Testis (tissue), 5 donors: ENCODE measurements at regions of chr10 and their contacts with region 1.

Region 1: DNA sequence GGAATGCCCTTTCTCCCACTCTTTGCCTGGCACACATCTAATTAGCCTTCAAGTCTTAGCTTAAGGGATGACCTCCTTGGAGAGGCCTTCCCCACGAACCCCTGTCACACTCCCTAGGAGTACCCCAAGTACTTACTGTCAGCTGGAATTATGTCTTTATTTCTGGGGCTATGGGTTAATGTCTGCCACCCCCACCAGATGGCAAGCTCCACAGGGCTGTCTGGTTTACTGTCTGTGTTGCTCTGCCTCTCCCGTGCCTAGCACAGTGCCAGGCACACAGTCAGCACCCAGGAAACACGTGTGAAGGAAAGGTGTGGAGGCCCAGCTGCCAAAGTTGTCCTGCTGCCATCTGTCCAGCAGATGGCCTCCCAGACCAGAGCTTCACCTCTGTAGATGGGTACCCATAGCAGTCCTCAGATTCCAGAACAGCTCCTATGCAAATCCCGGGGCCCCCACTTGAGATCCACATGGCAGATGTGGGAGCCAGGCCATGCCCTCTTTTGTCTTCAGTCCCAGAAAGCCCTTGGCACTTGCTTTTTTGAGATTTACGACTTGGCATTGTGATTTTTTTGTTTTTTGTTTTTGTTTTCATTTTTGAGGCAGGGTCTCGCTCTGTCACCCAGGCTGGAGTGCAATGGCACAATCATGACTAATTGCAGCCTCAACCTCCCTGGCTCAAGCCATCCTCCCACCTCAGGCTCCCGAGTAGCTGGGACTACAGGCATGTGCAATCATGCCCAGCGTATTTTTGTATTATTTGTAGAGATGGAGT is 17.2 kb upstream of the PALD1 start:
- DNase-seq: peak; percentile 80
- H3K4me3 ChIP-seq: no peak overlapping the region
- H3K27ac ChIP-seq: no peak overlapping the region
- H3K4me1 ChIP-seq: no peaks in the 10 kb centered on the region
- H3K27me3 ChIP-seq: no peaks in the 10 kb centered on the region
- CTCF ChIP-seq: peak; percentile 78 to 81 (median 80)
- POLR2A ChIP-seq: no peak

Region 2: GRCh38 chr10:70758757-70759514 is 297.5 kb after region 1 on chr10:
- intact Hi-C with region 1: loop called (anchors 10 kb)
- DNase-seq: peak; percentile 88
- H3K4me3 ChIP-seq: no peak overlapping the region
- H3K27ac ChIP-seq: no peak overlapping the region
- H3K4me1 ChIP-seq: no peaks in the 10 kb centered on the region
- H3K27me3 ChIP-seq: no peaks in the 10 kb centered on the region
- CTCF ChIP-seq: peak; percentile 48 to 75 (median 74)
- POLR2A ChIP-seq: no peak